ENCODE measurements at regions of chr22 and their contacts with region 1.

Region 1: DNA sequence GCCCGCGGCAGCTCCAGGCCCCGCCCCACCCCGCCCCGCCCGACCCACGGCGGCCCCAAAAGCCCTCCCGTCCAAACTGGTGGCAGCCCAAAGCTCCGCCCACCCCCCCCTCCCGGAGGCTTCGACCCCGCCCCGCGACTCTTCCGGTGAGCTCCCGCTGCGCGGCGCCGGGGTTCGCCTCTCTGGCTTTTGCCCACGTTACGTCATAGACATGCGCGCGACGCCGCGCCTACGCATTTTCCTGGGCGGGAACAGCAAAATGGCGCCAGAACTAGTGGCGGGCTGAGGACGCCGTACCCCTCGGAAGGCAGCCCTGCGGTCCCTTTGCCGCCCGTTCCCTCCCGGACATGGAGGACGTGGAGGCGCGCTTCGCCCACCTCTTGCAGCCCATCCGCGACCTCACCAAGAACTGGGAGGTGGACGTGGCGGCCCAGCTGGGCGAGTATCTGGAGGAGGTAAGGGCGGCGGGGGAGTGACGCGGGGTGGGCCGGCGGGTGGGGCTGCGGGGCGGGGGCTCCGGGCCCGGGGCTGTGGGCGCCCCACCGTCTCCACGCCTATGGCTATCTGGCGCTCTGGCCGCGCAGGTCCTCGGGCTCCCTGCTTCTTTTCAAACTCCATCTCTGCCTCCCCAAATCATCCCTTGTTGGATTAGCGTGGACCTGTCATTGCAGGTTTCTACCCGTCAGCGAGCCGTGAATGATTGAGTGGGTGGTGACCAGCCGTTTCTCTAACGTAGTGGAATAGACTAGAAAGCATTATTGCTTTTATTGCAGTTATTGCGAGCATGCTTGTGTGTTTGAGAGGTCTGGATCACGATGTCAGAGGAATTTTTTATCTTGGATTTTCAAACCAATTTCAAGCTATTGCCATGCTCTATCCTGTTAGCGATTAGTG is at the start of gene NCAPH2:
- DNase-seq: peak; percentile 98
- ATAC-seq: peak; percentile 36
- H3K4me3 Mint-ChIP-seq: peak within 1 kb of the TSS; percentile 98
- H3K27ac Mint-ChIP-seq: peak within 1 kb of the TSS; percentile 97
- H3K4me1 Mint-ChIP-seq: peaks cover 22% of the 10 kb centered on the region
- H3K27me3 Mint-ChIP-seq: no peaks in the 10 kb centered on the region
- CTCF ChIP-seq: no peak
- total RNA-seq, gene NCAPH2: 121 to 126 TPM

Region 2: DNA sequence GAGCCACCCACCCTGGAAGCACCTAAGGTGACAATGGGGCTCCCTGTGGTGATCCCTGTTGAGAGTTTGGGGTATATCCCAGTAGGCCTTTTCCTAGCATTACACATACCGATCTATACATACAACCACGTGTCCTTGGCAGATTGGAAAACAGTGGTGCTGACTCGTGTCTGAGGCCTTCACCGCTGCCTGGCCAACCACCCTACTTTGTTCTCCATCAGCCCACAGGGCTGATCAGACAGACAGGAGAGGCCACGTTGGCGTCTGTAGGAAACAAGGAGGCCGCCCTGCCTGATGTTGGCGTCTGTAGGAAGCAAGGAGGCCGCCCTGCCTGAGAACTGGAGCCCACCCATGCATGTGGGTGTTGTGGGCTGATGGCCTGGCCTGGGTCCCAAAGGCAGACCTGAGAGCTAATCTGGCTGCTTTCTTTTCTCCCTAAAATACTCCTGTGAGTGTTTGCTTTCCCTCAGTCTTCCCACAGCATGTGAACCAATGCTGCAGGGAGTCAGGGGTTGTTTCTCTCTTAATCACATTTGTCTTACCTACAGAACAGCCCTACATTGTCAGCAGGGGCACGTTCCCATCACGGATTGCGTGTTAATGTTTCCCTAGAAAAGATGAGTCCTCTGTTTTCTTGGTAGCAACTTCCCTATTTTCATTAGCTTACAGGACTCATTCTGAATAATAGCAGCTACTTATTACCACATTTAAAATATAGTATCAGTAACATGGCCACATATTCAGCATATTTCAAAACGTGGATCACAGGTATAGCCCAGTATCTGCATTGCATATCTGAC is 90.6 kb before region 1 on chr22:
- CTCF ChIA-PET with region 1: no interaction called
- POLR2A ChIA-PET with region 1: no interaction called
- intact Hi-C with region 1: no loop called
- DNase-seq: no peak
- ATAC-seq: no peak
- H3K4me3 Mint-ChIP-seq: no peak overlapping the region
- H3K27ac Mint-ChIP-seq: no peak overlapping the region
- H3K4me1 Mint-ChIP-seq: no peaks in the 10 kb centered on the region
- H3K27me3 Mint-ChIP-seq: no peaks in the 10 kb centered on the region
- CTCF ChIP-seq: no peak

Region 3: GRCh38 chr22:50435291-50436014 is 72.8 kb before region 1 on chr22:
- CTCF ChIA-PET with region 1: no interaction called
- POLR2A ChIA-PET with region 1: no interaction called
- intact Hi-C with region 1: no loop called
- DNase-seq: no peak
- ATAC-seq: no peak
- H3K4me3 Mint-ChIP-seq: no peak overlapping the region
- H3K27ac Mint-ChIP-seq: no peak overlapping the region
- H3K4me1 Mint-ChIP-seq: no peaks in the 10 kb centered on the region
- H3K27me3 Mint-ChIP-seq: no peaks in the 10 kb centered on the region
- CTCF ChIP-seq: no peak

Region 4: DNA sequence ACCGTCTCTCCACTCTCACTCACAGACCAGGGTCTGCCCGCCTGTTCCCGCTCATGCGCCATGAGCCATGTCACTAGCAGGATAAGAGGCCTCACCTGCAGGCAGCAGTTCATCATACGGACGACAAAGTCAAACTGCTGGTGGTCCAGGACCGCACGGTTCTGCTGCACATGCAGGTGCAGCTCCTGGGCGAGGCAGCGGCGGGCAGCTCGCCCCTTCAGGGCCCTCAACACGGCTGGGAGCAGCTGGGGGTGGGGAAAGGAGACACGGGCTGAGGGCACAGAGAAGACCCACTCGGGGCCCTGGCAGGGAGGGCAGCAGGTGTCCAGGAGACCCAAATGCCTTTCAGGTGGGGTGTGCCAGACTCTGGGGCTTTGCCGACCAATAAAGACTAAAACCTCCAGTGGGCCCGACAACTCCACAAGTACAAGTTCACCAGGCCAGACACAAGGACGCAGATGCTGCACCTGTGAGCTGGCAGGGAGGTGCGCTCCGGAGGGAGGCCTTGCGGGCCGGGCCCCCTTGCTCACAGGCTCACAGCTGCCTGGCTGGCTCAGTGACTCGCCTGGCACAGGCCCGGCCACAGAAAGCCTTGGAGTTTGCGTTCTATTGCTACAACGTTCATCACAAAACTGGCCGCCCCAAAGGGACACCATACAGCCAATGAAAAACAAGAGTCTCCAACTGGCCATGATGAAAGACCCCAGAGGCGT is 44.9 kb before region 1 on chr22:
- CTCF ChIA-PET with region 1: no interaction called
- POLR2A ChIA-PET with region 1: no interaction called
- intact Hi-C with region 1: no loop called
- DNase-seq: no peak
- ATAC-seq: no peak
- H3K4me3 Mint-ChIP-seq: no peak overlapping the region
- H3K27ac Mint-ChIP-seq: no peak overlapping the region
- H3K4me1 Mint-ChIP-seq: peaks cover 19% of the 10 kb centered on the region
- H3K27me3 Mint-ChIP-seq: no peaks in the 10 kb centered on the region
- CTCF ChIP-seq: no peak

Region 5: GRCh38 chr22:50537765-50538164 is 29.5 kb after region 1 on chr22:
- CTCF ChIA-PET with region 1: no interaction called
- POLR2A ChIA-PET with region 1: interaction called, 20 read pairs
- intact Hi-C with region 1: no loop called
- DNase-seq: no peak
- ATAC-seq: no peak
- H3K4me3 Mint-ChIP-seq: no peak overlapping the region
- H3K27ac Mint-ChIP-seq: peak overlapping the region; percentile 100
- H3K4me1 Mint-ChIP-seq: peaks cover 60% of the 10 kb centered on the region
- H3K27me3 Mint-ChIP-seq: no peaks in the 10 kb centered on the region
- CTCF ChIP-seq: no peak

Region 6: GRCh38 chr22:50599786-50600455 is 91.7 kb after region 1 on chr22:
- CTCF ChIA-PET with region 1: no interaction called
- POLR2A ChIA-PET with region 1: no interaction called
- intact Hi-C with region 1: no loop called
- DNase-seq: peak; percentile 71
- ATAC-seq: peak; percentile 96
- H3K4me3 Mint-ChIP-seq: peak overlapping the region; percentile 45
- H3K27ac Mint-ChIP-seq: no peak overlapping the region
- H3K4me1 Mint-ChIP-seq: peaks cover 6% of the 10 kb centered on the region
- H3K27me3 Mint-ChIP-seq: peaks cover 29% of the 10 kb centered on the region
- CTCF ChIP-seq: no peak